Endothelial cell of umbilical vein (primary cell): ENCODE measurements at regions of chr2 and their contacts with region 1.

Region 1: DNA sequence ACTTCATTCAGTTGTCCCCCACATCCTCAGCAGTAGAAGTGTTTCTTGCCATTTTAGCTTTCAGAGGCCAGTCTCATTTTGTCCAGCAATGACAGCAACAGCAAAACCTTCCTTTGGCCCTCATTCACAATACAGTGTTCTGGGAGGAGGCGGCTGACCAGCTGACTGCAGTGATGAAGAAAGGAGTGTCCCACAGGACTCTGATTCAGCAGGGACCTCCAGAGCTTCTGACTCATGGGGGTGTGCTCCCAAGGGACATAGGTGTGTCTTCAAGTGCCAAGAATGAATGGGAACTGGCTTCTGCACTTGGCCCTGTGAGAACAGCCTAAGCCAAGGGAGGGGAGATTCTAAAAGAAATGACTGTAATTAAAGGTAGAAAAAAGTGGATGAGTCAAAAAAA is 147.0 kb upstream of the PELI1 start:
- DNase-seq: no peak
- H3K4me3 ChIP-seq: no peak overlapping the region
- H3K27ac ChIP-seq: no peak overlapping the region
- H3K4me1 ChIP-seq: peaks cover 4% of the 10 kb centered on the region
- H3K27me3 ChIP-seq: peaks cover 0 to 6% of the 10 kb centered on the region in 2 experiments
- CTCF ChIP-seq: no peak
- POLR2A ChIP-seq: no peak

Region 2: GRCh38 chr2:64202206-64202845 is 88.9 kb before region 1 on chr2:
- CTCF ChIA-PET with region 1: no interaction called
- POLR2A ChIA-PET with region 1: interaction called, 11 read pairs
- dilution Hi-C with region 1: no loop called
- intact Hi-C with region 1: no loop called
- DNase-seq: peak; percentile 13
- H3K4me3 ChIP-seq: no peak overlapping the region
- H3K27ac ChIP-seq: no peak overlapping the region
- H3K4me1 ChIP-seq: no peaks in the 10 kb centered on the region
- H3K27me3 ChIP-seq: no peaks in the 10 kb centered on the region
- CTCF ChIP-seq: no peak
- POLR2A ChIP-seq: no peak